Activated CD8-positive, alpha-beta T cell treated with anti-CD3 and anti-CD28 coated beads, Interleukin-2, amount 10 ng/mL, durations not matched to agents 7 days and 5 days (primary cell): ENCODE measurements at regions of chr1 and their contacts with region 1.

Region 1: DNA sequence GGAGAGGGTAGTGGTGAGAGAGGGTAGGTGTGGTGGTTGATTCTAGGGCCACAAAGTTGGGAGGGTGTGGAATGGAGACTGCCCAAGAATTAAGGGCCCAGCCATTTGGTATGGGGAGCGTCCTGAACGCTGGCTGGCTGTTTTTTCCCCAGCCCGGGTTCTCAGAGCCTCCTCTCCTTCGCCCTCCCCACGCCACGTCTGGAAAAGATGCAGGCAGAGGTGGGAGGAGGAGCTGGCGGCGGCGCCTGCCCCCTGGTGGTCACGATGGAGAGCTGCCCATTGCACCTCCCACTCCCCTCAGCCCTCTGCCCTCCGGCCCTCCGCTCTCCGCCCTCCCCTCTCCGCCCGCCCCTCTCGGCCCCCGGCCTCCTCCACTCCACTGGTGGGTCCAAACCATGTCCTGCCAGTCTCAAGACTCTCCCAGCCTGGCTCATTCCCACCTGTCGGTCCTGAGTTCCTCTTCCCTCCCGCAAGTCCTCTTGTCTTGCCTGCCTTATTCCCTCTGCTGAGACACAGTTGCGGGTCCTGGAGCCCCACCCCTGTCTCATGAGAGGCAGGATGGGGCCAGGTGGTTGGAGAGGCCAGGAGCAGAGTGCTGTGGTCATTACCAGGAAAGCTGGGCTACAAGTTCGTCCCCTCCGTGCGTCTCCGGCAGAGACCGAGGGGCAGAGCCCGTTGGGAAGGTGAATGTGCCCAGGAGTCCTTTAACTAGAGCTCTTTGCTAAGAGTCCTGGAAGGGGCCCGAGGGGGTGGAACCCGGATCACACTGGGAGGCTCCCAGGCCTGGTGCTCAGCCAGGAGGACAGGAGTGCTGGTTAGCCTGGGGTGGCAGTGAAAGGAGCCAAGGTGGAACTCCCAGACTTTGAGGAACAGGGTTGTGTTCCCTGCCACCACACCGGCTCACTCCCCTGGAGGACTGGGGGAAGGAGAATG is 22.6 kb downstream of the ETNK2 start:
- DNase-seq: peak; percentile 68
- ATAC-seq: peak; percentile 91
- H3K4me3 Mint-ChIP-seq: no peak overlapping the region
- H3K27ac Mint-ChIP-seq: no peak overlapping the region
- H3K4me1 Mint-ChIP-seq: peaks cover 6% of the 10 kb centered on the region
- H3K27me3 Mint-ChIP-seq: no peaks in the 10 kb centered on the region

Region 2: DNA sequence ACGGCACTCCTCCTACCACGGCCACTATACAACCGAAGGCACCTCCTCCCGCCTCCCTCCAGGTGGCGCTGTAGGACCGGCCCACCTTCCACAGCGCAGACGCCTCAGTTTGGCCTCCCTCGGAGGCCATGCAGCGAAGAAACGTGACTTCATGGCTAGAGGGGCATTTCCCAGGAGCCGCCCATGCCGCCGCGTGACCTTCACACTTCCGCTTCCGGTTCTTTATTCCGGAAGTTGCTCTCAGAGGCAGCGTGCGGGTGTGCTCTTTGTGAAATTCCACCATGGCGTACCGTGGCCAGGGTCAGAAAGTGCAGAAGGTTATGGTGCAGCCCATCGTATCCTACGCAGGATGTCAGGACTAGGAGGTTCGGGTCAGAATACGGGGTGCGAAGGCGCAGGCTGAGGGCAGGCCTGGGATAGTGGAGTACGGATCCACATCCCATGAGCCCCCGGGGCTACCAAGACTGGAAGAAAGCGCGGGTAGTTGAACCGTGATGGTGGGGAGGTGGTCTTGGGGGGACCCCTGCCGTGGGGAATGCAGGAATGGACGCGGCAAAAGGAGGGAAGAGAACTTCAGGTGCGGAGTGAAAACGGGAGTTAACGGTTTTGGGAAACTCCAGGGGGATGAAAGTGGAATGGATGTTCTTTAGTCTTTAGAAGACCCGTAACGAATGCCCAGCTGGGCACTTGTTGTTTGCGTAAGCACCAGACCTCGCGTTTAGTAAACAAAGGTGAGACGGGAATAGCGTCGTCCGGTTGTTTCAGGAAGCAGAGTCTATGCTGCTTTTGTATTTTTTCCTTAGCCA is 267.6 kb before region 1 on chr1 and contains the start of gene SNRPE:
- CTCF ChIA-PET with region 1: interaction called, 71 read pairs
- POLR2A ChIA-PET with region 1: no interaction called
- DNase-seq: peak; percentile 97
- ATAC-seq: peak; percentile 98
- H3K4me3 Mint-ChIP-seq: peak within 1 kb of the TSS; percentile 96
- H3K27ac Mint-ChIP-seq: peak within 1 kb of the TSS; percentile 94
- H3K4me1 Mint-ChIP-seq: peaks cover 18% of the 10 kb centered on the region
- H3K27me3 Mint-ChIP-seq: no peaks in the 10 kb centered on the region
- total RNA-seq, gene SNRPE: 187 to 201 TPM

Region 3: GRCh38 chr1:203871107-203871875 is 257.9 kb before region 1 on chr1:
- CTCF ChIA-PET with region 1: interaction called, 103 read pairs
- POLR2A ChIA-PET with region 1: interaction called, 3 read pairs
- DNase-seq: peak; percentile 50
- ATAC-seq: peak; percentile 78
- H3K4me3 Mint-ChIP-seq: no peak overlapping the region
- H3K27ac Mint-ChIP-seq: no peak overlapping the region
- H3K4me1 Mint-ChIP-seq: no peaks in the 10 kb centered on the region
- H3K27me3 Mint-ChIP-seq: no peaks in the 10 kb centered on the region

Region 4: DNA sequence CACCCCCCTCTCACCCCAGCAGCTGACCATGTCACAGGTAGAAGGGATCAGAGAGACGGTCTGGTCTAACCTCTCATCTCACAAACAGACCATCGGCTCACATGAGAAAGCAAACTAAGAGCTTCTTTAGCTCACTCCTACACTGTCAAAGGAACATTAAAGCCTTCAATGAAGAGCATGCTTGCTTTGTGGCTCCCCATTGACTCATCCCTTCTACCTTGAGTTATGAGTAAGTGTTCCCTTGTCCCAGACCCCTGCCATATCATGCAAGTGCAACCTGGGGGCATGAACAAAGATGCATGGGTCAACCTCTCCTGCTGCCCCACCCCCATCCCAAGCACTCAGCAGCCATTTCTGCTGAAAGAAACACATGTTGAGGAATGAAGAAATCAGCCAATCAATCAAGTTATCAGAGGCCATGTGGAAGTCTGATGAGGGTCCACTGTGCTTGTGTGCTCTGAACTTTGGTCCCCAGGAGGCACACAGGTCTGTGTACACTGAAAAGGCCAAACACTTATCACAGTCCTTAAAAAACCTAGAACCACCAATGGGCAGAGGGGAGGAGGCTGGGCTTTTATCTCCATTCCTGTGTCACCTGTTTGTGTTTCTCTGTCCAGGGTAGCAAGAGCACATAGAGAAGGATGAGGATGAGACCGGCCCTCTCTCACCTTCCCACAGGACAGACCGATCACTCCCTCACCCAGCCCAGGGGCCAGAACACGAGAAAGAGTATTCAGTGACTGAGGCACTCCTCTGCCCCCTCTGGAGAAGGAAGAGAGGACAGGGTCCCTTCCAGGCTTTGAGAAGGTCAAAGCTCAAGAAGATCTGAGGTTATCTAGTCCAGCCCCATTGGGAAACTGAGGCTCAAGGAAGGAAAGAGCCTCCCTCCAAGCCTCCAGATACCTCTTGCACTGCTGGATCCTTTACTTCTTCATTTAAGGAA is 13.1 kb after region 1 on chr1:
- CTCF ChIA-PET with region 1: interaction called, 22 read pairs
- POLR2A ChIA-PET with region 1: no interaction called
- DNase-seq: no peak
- ATAC-seq: no peak
- H3K4me3 Mint-ChIP-seq: no peak overlapping the region
- H3K27ac Mint-ChIP-seq: no peak overlapping the region
- H3K4me1 Mint-ChIP-seq: no peaks in the 10 kb centered on the region
- H3K27me3 Mint-ChIP-seq: peaks cover 5% of the 10 kb centered on the region

Region 5: DNA sequence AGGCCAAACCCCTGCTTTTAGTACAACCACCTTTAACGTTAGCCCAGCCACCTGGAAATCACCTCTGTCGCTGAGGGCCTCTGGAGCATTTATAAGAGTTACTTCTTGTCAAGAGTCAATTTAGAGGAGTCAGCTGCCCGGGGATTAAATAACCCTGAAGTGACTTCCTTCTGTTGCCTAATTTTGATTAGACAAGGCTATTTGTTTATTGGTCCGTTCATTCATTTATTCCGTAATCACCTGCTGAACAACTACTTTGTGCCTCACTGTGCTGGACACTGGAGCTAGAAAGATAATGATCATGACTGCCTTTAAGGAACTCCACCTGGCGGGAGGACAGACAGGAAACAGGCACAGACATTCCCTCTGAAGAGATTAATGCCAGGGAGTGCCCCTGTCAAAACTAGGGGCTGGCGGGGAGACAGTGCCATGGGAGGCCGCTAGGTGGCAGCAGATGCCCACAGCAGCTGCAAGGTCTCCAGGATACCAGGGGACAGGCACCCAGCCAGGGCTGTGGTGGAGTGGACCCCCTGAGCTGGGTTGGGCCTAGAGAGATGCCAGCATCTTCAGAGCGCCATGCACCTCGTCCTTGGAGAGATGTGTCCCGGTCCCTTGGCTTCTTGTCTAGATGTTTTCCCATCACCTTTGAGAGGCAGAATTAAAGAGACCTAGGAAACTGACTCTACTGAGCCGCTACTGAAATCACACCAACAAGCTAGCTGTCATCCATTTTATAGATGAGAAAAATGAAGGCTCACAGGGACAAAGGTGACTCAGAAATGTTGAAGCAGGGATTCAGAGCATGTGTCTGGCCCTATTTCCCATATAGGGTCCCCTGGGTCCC is 33.2 kb after region 1 on chr1:
- CTCF ChIA-PET with region 1: interaction called, 13 read pairs
- POLR2A ChIA-PET with region 1: no interaction called
- DNase-seq: peak; percentile 81
- ATAC-seq: peak; percentile 94
- H3K4me3 Mint-ChIP-seq: no peak overlapping the region
- H3K27ac Mint-ChIP-seq: no peak overlapping the region
- H3K4me1 Mint-ChIP-seq: no peaks in the 10 kb centered on the region
- H3K27me3 Mint-ChIP-seq: peaks cover 6% of the 10 kb centered on the region